ENCODE measurements at regions of chr3 and their contacts with region 1.

Region 1: DNA sequence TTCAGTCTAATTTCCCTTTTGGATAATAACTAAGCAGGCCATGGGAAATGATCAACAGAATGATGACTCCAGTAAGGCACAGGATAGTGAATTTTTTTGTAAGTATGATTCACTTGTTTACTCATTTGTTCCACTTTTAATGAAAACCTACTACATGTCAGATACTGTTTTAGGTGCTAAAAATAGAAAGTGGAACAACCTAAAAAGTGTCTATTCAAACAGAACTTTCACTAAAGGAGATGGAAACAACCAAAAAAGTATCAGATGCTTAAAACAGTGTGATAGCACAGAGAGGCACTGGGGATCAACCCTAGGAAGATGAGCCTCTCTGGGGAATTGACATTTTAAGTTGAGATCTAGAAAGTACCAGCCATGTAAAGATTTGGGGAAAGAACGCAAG is 11.1 kb downstream of the RYK start:
- DNase-seq: no peak
- H3K4me3 Mint-ChIP-seq: peak overlapping the region; percentile 1
- H3K27ac Mint-ChIP-seq: peak overlapping the region; percentile 58
- H3K4me1 Mint-ChIP-seq: peaks cover 79% of the 10 kb centered on the region
- H3K27me3 Mint-ChIP-seq: no peaks in the 10 kb centered on the region

Region 2: GRCh38 chr3:134029734-134030378 is 209.7 kb before region 1 on chr3 and contains the start of gene SLCO2A1:
- CTCF ChIA-PET with region 1: no interaction called
- POLR2A ChIA-PET with region 1: no interaction called
- intact Hi-C with region 1: no loop called
- DNase-seq: peak; percentile 22
- H3K4me3 Mint-ChIP-seq: peak within 1 kb of the TSS; percentile 40
- H3K27ac Mint-ChIP-seq: no peak within 1 kb of the TSS
- H3K4me1 Mint-ChIP-seq: peaks cover 5% of the 10 kb centered on the region
- H3K27me3 Mint-ChIP-seq: peaks cover 32% of the 10 kb centered on the region
- total RNA-seq, gene SLCO2A1: not detected

Region 3: GRCh38 chr3:134222835-134223234 is 16.7 kb before region 1 on chr3:
- CTCF ChIA-PET with region 1: interaction called, 29 read pairs
- POLR2A ChIA-PET with region 1: no interaction called
- intact Hi-C with region 1: no loop called
- DNase-seq: no peak
- H3K4me3 Mint-ChIP-seq: no peak overlapping the region
- H3K27ac Mint-ChIP-seq: no peak overlapping the region
- H3K4me1 Mint-ChIP-seq: peaks cover 18% of the 10 kb centered on the region
- H3K27me3 Mint-ChIP-seq: no peaks in the 10 kb centered on the region

Region 4: DNA sequence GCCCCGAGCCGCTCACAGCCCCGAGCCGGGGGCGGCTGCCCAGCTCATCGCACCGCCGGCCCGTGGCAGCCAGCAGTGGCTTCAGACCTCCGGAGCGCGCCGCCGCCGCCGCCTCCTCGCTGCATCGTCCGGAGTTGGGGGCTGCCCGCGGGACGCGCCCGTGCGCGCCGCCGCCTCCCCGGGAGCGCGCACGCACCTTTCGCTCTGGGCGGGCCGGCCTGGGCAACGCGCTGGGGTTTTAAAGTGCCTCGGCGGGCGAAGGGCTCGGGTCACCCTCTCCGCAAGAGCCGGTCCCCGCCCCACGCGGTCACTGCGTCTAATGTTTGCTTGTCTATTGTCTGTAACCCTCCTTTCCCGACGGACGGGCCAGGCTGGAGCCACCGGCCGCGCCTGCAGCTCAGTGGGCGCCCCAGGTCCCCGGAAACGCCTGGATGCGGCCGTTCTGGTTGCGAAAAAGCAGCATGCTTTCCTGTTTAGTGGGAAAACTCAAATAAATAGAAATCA is 11.2 kb after region 1 on chr3 and contains the start of gene RYK:
- CTCF ChIA-PET with region 1: interaction called, 3 read pairs
- POLR2A ChIA-PET with region 1: interaction called, 4 read pairs
- intact Hi-C with region 1: loop called (anchors 1 kb)
- DNase-seq: peak; percentile 82
- H3K4me3 Mint-ChIP-seq: peak within 1 kb of the TSS; percentile 90
- H3K27ac Mint-ChIP-seq: peak within 1 kb of the TSS; percentile 85
- H3K4me1 Mint-ChIP-seq: peaks cover 56% of the 10 kb centered on the region
- H3K27me3 Mint-ChIP-seq: peaks cover 5% of the 10 kb centered on the region
- total RNA-seq, gene RYK: 16.7 to 17.6 TPM

Region 5: GRCh38 chr3:134299185-134299887 is 59.8 kb after region 1 on chr3:
- CTCF ChIA-PET with region 1: no interaction called
- POLR2A ChIA-PET with region 1: interaction called, 5 read pairs
- intact Hi-C with region 1: loop called (anchors 1 kb)
- DNase-seq: no peak
- H3K4me3 Mint-ChIP-seq: no peak overlapping the region
- H3K27ac Mint-ChIP-seq: no peak overlapping the region
- H3K4me1 Mint-ChIP-seq: no peaks in the 10 kb centered on the region
- H3K27me3 Mint-ChIP-seq: peaks cover 21% of the 10 kb centered on the region